Activated CD4-positive, alpha-beta T cell treated with anti-CD3 and anti-CD28 coated beads, Interleukin-2, amount 10 ng/mL, durations not matched to agents 24 days and 14 days (primary cell): ENCODE measurements at regions of chr9 and their contacts with region 1.

Region 1: DNA sequence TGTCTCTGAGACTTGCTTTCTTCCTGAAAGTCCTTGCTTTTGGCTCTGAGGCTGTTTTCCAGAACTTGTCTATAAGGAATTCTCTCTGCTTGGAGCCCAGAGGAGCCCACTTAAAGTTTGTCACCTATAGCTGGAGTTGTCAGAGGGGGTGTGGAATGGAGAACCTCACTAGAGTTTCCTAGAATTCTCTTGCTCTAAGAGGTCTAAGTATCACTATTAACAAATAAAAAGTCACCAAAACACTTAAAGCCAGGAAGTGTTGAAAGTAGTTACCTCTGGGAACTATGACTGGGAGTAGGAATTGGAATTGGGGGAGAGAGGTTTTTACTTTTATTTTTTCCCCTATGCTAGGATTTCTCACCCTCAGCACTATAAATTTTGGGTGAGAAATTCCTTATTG is 15.0 kb downstream of the SIT1 start:
- DNase-seq: no peak
- H3K4me3 Mint-ChIP-seq: no peak overlapping the region
- H3K27ac Mint-ChIP-seq: peak overlapping the region; percentile 14
- H3K4me1 Mint-ChIP-seq: peaks cover 48% of the 10 kb centered on the region
- H3K27me3 Mint-ChIP-seq: no peaks in the 10 kb centered on the region

Region 2: DNA sequence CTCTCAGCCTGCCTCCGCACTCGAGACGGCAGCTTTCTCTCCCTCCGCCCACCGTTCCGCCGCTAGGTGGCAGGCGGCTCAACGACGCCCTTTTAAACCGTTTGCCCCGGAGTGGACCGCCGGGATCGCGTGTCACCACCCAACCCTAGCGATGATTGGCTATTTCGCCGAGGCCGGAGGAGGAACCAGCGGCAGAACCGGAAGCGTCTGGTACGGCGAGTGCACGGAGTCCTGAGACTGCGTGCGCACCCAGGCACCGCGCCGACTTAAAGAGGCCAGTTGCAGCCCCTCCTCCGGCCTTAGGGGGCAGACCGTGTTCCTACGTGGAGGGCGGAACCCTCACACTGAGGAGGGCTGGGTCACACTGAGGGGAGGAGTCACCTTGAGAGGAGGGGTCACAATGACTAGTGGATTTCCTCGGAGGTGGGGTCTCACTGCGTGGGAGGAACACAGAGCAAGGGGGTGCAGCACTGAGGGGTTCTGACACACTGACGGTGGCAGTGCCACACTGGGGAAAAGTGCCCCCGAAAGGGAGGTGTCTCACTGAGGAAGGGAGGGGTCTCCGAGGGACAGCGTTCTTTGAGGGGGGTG is 31.6 kb before region 1 on chr9:
- intact Hi-C with region 1: no loop called
- DNase-seq: peak; percentile 100
- H3K4me3 Mint-ChIP-seq: peak overlapping the region; percentile 90
- H3K27ac Mint-ChIP-seq: peak overlapping the region; percentile 96
- H3K4me1 Mint-ChIP-seq: peaks cover 22% of the 10 kb centered on the region
- H3K27me3 Mint-ChIP-seq: no peaks in the 10 kb centered on the region

Region 3: GRCh38 chr9:35618854-35619799 is 16.6 kb before region 1 on chr9:
- intact Hi-C with region 1: loop called (anchors 2 kb)
- DNase-seq: peak; percentile 82
- H3K4me3 Mint-ChIP-seq: peak overlapping the region; percentile 81
- H3K27ac Mint-ChIP-seq: peak overlapping the region; percentile 95
- H3K4me1 Mint-ChIP-seq: peaks cover 59% of the 10 kb centered on the region
- H3K27me3 Mint-ChIP-seq: peaks cover 1% of the 10 kb centered on the region